Posterior vena cava (tissue), 2 donors: ENCODE measurements at regions of chr1 and their contacts with region 1.

Region 1: GRCh38 chr1:111755331-111756123 is at the start of gene DDX20:
- DNase-seq: peak; percentile 98
- total RNA-seq, gene DDX20: 7.8 to 8.0 TPM

Region 2: DNA sequence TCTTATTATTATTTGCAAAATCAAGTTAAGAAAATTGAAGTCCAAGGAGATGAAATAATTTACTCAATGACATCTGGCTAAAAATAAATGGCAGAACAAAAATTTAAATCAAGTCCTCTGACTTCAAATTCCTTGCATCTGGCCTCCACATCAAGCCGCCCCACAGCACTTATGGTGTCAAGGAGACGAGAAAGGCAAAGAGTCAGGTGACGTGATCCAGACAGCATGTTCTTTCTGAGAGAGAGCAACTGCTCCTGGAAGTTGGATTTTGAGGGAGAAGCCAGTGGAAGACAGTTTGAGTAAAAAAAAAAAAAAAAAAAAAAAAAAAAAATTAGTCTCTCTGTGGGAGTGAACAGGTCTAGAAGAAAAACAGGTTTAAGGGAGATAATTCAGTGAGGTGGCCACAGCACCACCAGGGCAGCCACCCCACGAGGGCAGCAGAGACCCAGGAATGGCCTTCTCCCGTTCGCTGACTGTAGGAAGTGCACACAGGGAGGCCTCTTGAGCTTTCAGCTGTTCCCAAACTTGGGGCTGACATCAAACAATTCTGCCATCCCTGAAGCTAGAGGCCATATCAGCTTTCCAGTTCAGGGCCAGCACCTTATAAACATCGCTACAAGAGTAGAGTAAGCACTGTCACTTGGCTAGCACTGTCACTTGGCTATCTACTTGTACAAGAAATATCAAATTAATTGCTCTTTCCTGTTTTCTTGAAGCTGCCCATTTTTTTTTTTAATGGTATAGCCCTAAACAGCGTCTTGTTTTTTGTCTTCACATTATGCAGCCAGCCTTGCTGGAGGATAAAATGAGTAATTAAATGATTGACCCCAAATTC is 273.9 kb before region 1 on chr1:
- intact Hi-C with region 1: loop called in 1 of 2 experiments (anchors 10 kb)
- DNase-seq: peak; percentile 93

Region 3: DNA sequence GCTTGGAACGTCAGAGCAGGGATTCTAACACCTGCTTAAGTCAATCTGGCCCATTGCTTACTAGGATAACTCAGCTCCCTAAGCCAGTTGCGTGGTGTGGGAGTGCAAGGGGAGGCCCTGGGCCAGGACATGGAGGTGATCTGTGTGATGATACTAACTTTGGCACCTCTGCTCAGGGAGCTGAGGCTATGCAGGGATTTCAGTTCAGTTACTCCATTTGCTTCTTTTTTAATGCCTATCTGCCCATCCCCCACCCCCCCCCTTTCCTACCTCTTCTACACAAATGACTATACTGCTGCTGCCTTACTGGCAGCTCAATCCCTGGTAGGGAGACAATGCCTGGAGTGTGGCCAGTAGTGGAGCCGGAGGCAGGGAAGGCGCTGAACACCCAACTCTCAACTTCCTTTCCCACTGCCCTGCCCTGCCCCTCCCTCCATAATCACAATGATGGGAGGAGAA is 35.8 kb before region 1 on chr1:
- intact Hi-C with region 1: loop called in 1 of 2 experiments (anchors 5 kb)
- DNase-seq: no peak